ENCODE measurements at regions of chr15 and their contacts with region 1.

Region 1: DNA sequence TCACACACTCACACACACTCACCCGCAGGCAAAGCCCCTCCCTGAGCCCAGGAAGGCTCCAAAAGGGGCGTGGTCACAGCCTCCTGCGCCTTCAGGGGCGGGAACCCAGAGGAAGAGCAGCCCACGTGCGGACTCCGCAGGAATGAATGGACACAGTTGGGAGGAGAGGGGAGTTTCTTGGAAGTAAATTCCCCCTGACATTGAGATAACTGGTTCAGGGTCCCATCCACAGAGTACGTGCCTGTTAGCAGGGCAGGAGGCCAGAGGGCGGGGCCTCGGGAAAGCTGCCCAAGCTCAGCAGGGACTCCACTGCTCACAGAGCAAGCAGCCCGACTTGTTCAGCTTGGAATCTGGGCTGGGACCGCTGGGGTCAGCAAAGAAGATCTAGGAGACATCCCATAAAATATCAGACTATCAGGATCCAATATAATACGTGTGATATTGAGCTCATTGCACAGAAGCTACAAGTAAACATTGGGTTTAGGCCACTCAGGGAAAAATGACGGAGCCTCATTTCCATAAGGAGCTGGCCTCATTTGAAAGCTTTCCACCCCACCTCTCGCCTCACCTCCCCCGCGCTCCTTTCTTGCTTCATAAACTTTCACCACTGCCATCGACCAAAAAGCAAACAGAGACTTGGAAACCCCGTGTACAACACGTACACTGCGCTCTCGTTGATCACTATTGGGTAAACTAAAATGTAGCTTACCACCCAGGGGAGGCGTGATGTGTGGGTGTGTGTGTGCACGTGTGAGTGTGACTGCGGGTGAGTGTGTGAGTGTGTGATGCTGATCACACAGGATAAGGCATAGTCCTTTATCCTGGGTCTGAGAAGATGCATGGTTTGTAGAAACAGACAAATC is 36.0 kb downstream of the TM2D3 start:
- DNase-seq: peak; percentile 78 to 87 (median 84)
- ATAC-seq: peak; percentile 56 to 67 (median 58)
- H3K4me3 ChIP-seq: no peak overlapping the region
- H3K27ac ChIP-seq: peak overlapping the region; percentile 69 to 86 (median 85)
- H3K4me1 ChIP-seq: peaks cover 0 to 40% (median 17%) of the 10 kb centered on the region in 4 donors
- H3K27me3 ChIP-seq: no peaks in the 10 kb centered on the region
- CTCF ChIP-seq: no peak
- POLR2A ChIP-seq: no peak

Region 2: DNA sequence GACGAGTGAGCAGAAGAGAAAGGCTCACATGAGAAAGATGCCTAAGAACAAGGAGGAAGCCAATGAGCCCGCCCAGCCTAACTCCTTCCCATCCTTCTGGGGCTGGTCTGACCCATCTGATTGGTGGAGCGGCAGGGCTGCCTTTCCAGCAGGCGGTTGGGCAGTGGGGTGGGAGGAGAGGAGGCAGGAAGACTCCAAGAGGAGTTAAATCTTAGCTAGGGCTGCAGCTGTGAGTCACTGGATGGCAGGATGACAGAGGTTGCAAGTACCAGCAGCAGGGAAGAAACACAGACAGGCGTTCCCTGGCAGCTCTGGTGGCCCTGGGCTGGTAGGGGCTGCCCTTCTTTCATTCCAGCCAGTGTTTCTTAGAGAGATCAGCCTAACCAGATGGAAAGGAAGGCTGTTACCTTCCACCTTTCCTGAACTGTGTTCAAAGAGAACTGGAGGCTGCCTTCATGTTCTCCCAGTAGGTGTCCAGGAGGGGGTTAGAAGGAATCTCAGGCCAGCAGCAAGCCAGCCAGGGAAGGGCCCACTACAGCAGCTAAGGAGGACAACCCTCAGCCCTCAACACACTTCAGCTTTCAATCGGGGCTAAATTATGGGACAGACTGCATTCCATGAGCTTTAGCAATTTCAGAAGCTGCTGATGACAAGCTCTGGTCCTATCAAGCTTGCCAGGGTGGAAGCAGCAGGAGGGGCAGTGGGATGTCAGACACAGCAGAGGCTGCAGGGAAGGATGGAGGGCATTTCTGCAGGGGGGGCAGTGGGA is 414.6 kb before region 1 on chr15:
- intact Hi-C with region 1: no loop called
- DNase-seq: peak in 1 of 3 donors; percentile 59
- ATAC-seq: peak; percentile 75 to 83 (median 79)
- H3K4me3 ChIP-seq: no peak overlapping the region
- H3K27ac ChIP-seq: peak overlapping the region in 1 of 3 donors; percentile 24
- H3K4me1 ChIP-seq: no peaks in the 10 kb centered on the region
- H3K27me3 ChIP-seq: no peaks in the 10 kb centered on the region
- CTCF ChIP-seq: no peak
- POLR2A ChIP-seq: no peak

Region 3: DNA sequence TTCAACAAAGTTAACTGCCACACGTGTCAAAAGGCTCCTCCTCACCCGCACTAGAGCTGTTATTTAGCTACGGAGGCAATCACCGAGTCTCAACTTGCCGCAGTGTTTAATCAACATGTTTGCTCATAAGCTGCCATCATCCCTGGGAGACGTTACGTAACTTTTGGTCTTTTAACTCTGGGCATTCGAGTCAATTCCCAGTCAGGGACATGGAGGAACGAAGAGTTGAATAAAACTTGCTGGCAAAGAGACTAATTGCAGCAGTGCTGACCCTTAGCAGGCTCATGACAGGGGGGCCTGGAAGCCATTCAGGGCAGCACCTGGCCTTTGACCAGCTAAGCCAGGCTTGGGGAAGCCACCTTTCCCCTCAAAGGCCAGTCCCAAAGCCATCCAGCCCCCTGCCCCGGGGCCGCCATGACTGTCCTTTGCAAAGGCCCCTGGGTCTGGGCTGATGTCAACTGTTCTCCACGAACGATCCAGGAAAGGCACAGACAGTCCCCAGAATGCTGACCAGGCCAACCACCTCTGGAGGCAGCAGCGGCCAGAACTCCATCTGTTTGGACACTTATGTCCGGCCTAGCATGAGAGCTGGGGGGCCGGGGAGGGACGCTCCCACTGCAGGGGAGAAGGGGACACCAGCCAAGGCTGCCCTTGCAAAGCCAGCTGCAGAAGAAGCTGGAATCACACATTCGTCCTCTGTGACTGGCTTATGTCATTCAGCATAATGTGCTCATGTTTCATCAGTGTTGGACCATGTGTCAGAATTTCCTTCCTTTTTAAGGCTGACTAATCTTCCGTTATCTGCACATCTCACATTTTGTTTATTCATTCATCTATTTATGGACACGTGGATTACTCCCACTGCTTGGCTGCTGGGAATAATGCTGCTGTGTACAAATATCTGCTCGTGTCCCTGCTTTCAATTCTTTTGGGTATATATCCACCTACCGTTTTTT is 170.4 kb before region 1 on chr15:
- intact Hi-C with region 1: loop called in 1 of 2 experiments (anchors 10 kb)
- DNase-seq: peak in 2 of 3 donors; percentile 75 to 76
- ATAC-seq: peak; percentile 41 to 61 (median 44)
- H3K4me3 ChIP-seq: no peak overlapping the region
- H3K27ac ChIP-seq: peak overlapping the region; percentile 93 to 98 (median 97)
- H3K4me1 ChIP-seq: peaks cover 0 to 83% (median 40%) of the 10 kb centered on the region in 4 donors
- H3K27me3 ChIP-seq: no peaks in the 10 kb centered on the region
- CTCF ChIP-seq: no peak
- POLR2A ChIP-seq: peak; percentile 34

Measured in right lobe of liver (tissue), 6 donors.